Body of pancreas (tissue), 4 donors: ENCODE measurements at regions of chr1 and their contacts with region 1.

Region 1: GRCh38 chr1:207885129-207886032 is 25.5 kb downstream of the CD34 start:
- DNase-seq: peak; percentile 88 to 91 (median 88)
- ATAC-seq: peak; percentile 94
- H3K4me3 ChIP-seq: no peak overlapping the region
- H3K27ac ChIP-seq: no peak overlapping the region
- H3K4me1 ChIP-seq: peaks cover 19% of the 10 kb centered on the region
- H3K27me3 ChIP-seq: no peaks in the 10 kb centered on the region
- CTCF ChIP-seq: peak; percentile 93 to 98 (median 95)
- POLR2A ChIP-seq: no peak

Region 2: DNA sequence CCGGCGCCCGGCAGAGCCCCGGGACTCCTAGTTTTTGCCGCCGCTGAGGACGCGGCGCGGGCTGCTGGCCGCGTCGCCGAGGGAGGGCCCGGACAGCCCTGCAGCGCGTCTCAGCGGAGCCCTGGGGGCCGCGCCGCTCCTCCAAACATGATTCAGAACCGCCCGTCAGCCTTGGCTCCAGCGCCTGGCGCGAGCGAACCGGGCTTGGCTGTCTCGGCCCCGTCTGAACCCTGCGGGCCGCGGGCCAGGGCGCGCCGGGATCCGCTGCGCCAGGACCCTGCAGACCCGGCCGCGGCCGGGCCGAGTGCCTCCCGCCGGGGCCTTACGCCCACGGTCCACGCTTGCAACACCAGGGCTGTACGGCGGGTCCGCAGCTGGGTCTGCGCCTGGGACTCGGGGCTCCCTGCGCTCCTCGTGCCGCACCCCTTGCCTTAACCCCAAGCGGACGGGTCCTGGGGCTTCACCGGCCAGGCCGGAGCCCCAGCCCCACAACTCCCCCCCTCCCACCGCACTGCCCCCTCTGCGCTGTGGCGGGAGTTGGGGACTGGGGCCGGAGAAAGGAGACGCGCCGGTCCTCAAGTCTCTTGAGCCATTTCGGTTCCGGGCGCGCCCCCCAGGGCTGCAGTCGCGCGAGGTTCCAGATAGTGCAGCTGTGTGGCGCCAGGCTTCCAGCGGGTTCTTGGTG is 73.9 kb after region 1 on chr1:
- intact Hi-C with region 1: loop called (anchors 5 kb)
- DNase-seq: peak; percentile 59 to 77 (median 72)
- ATAC-seq: peak; percentile 15
- H3K4me3 ChIP-seq: peak overlapping the region; percentile 16 to 18
- H3K27ac ChIP-seq: peak overlapping the region in 3 of 4 donors; percentile 23 to 39 (median 25)
- H3K4me1 ChIP-seq: peaks cover 30% of the 10 kb centered on the region
- H3K27me3 ChIP-seq: no peaks in the 10 kb centered on the region
- CTCF ChIP-seq: no peak
- POLR2A ChIP-seq: peak in 1 of 3 donors; percentile 21